ENCODE measurements at regions of chr17 and their contacts with region 1.

Region 1: DNA sequence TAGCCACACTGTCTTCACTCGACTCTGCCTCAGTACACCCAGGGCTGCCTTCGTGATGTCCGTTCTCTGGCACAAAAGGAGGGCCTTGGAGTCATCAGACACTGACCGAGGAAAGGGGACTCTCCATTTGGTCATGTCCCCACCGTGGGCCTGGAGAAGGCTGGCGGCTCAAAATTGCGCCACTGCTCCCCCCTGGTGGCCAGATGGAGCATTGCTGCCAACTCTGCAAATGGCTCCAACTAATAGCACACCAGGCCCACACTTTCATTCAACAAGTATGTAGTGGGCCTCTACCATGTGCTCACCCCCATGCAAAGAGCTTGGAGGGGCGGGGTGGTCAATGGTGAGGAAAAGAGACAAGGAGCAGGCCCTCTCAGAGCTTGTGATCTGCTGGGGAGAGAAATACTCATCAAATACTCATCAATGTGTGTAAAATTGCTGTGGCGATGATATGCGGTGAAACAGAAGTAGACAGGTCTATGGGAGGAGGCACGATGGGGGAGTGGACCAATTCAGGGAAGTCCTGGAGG is 5.2 kb upstream of the GRIN2C start:
- DNase-seq: peak; percentile 80
- H3K4me3 Mint-ChIP-seq: no peak overlapping the region
- H3K27ac Mint-ChIP-seq: no peak overlapping the region
- H3K4me1 Mint-ChIP-seq: peaks cover 23% of the 10 kb centered on the region
- H3K27me3 Mint-ChIP-seq: peaks cover 43% of the 10 kb centered on the region

Region 2: DNA sequence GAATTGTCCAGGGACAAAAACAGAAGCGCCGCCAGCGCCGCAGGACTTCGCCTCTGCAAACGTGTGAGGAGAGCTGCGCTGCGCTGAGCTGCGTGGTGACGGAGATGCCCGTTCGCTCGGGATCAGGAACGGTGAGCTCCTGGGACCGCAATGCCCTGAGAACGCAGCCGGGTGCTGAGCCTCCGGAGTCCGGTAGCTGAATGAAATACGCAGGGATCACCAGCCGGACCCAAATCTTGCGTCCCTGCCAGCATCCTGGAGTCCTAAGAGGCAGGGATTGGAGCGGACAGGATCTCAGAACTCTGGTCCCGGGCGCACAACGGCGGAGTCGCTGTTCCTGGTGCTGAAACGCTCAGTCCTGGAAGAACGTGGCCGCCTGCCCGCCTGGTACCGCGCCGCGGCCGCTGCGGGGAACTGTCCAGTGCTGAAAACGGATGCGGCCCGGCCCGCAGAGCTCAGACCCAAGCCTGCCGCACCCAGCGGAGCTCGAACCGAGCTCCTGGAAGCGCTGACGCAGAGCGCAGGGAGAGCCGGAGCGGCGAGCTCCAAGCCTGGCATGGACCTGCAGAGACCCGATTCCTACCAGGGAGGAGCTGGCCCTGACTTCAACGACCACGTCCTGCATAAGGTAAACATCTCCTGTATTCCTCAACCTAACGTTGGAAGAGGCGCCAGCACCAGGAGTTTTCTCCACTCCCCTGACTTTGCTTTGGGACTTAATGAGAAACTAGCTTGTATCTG is 193.7 kb before region 1 on chr17:
- CTCF ChIA-PET with region 1: no interaction called
- DNase-seq: peak; percentile 89
- H3K4me3 Mint-ChIP-seq: no peak overlapping the region
- H3K27ac Mint-ChIP-seq: no peak overlapping the region
- H3K4me1 Mint-ChIP-seq: no peaks in the 10 kb centered on the region
- H3K27me3 Mint-ChIP-seq: peaks cover 83% of the 10 kb centered on the region

Region 3: DNA sequence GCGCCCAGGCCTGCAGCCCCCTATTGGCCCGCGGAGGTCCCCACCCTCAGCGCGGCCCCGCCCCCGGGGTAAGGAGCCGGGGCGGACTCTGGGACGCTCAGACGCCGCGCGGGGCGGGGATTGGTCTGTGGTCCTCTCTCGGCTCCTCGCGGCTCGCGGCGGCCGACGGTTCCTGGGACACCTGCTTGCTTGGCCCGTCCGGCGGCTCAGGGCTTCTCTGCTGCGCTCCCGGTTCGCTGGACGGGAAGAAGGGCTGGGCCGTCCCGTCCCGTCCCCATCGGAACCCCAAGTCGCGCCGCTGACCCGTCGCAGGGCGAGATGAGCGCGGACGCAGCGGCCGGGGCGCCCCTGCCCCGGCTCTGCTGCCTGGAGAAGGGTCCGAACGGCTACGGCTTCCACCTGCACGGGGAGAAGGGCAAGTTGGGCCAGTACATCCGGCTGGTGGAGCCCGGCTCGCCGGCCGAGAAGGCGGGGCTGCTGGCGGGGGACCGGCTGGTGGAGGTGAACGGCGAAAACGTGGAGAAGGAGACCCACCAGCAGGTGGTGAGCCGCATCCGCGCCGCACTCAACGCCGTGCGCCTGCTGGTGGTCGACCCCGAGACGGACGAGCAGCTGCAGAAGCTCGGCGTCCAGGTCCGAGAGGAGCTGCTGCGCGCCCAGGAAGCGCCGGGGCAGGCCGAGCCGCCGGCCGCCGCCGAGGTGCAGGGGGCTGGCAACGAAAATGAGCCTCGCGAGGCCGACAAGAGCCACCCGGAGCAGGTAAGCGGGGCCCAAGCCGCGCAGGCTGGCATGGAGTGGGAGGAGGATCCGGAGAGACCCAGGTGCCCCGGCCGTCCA is 116.2 kb before region 1 on chr17 and contains the start of gene NHERF1:
- CTCF ChIA-PET with region 1: interaction called, 38 read pairs
- DNase-seq: peak; percentile 95
- H3K4me3 Mint-ChIP-seq: peak within 1 kb of the TSS; percentile 99
- H3K27ac Mint-ChIP-seq: peak within 1 kb of the TSS; percentile 88
- H3K4me1 Mint-ChIP-seq: peaks cover 64% of the 10 kb centered on the region
- H3K27me3 Mint-ChIP-seq: no peaks in the 10 kb centered on the region

Region 4: DNA sequence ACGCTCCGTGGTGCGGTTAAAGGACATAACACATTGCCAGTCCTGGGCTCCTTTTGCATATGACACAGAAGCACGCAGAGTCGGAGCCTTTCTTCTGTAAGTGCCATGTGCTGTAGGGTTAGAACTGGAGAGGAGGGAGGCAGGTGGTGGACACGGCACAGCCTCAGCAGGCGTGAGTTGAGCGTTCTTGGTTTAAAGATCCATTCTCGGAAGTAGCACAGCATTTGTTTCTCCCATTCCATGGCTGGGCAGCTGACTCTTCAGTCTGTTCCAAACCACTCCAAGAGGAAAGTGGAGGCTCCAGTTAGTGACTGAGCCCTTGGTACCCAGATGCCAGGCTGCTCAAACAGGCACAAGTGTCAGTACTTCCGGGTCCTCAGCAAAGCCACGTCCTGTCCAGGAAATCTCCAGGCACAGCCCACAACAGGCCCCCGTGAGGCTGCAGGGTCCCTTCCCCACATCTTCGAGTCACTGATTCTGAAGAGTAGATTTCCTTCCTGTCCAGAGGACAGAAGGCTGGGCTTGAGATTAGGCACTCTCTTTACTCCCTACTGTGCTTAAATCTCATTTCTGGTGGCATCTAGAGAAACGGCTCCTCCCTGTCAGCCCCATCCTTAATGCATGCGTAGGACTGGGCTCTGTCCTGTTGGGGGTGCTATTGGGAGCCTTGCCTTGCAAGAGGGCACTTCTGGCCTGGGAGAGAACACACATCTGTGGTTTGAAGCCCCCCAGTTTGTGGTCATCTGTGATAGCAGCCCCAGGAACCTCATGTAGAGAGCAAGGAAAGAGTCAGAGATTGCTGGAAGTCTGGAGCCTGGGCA is 49.2 kb before region 1 on chr17:
- CTCF ChIA-PET with region 1: interaction called, 11 read pairs
- DNase-seq: no peak
- H3K4me3 Mint-ChIP-seq: no peak overlapping the region
- H3K27ac Mint-ChIP-seq: no peak overlapping the region
- H3K4me1 Mint-ChIP-seq: peaks cover 7% of the 10 kb centered on the region
- H3K27me3 Mint-ChIP-seq: no peaks in the 10 kb centered on the region

Region 5: DNA sequence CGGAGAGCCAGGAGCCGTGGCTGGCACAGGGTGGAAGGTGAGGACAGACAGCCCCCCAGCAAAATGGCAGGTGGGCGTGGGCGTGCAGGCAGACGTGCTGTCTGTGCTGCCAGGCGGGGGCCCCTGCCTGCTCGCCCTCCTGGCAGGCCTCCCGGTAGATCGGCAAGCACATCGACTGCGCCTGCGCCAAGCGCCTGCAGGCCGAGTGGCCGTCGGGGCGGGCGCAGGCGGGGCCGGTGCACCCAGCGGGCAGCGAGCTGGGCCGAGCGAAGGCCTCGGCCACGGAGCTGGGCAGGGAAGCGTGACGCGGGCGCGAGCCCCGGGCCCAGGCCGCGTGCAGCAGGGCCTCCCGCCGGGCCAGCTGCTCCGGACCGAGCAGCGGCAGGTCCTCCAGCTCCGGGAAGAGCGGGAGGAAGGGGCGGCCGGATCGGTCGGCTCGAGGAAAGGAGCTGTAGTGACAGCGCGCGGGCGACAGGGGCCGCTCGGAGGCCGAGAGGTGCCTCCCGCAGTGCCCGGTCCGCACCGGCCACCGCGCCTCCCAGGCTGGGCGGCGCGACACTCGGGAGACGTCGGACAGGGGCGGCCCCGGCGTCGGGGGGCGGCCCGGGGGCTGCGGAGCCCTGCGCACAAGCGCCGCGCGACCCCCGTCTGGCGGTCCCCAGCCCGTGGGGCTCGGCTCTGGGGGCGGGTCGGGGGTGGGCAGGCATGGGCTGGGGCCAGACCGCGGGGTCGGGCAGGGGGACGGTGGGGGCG is 22.2 kb before region 1 on chr17:
- CTCF ChIA-PET with region 1: interaction called, 22 read pairs
- DNase-seq: no peak
- H3K4me3 Mint-ChIP-seq: no peak overlapping the region
- H3K27ac Mint-ChIP-seq: no peak overlapping the region
- H3K4me1 Mint-ChIP-seq: peaks cover 13% of the 10 kb centered on the region
- H3K27me3 Mint-ChIP-seq: peaks cover 44% of the 10 kb centered on the region